Psoas muscle (tissue), 8 donors: ENCODE measurements at regions of chr19 and their contacts with region 1.

Region 1: DNA sequence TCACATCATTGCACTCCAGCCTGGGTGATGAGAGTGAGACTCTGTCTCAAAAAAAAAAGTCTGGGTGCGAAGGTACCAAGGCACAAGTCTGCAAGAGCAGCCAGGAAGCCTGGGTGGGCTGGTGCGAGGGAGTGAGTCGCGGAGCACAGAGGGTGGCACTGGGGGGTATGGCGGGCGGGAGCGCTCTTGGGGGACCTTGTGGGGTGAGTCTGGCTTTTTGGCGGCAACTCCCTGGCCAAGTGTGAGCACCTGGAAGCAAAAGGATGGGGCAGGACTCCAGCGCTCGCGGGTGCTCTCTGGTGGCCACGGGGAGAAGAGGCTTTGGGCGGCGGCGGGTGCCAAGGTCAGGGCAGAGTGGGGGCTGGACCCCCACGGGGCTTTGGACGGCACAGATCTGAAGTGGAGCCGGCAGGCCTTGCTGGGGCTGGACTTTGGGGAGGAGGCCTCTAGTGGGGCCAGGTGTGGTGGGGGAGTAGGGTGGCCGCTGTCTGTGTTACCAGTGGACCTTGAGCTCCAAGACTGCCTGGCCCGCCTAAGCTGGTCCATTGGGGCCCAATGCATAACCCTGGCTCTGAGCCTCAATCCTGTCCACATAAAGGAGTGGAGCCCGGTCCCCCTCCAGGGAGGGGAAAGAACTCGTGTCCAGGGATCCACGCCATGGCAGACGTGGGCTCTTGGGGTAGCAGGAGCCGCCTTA is 1.6 kb downstream of the P2RY11 start:
- DNase-seq: peak; percentile 59 to 77
- ATAC-seq: peak; percentile 20 to 63 (median 46)
- H3K4me3 ChIP-seq: no peak overlapping the region
- H3K27ac ChIP-seq: no peak overlapping the region
- H3K4me1 ChIP-seq: peaks cover 21% of the 10 kb centered on the region
- H3K27me3 ChIP-seq: no peaks in the 10 kb centered on the region
- CTCF ChIP-seq: peak; percentile 50

Region 2: GRCh38 chr19:10251792-10252694 is 139.0 kb after region 1 on chr19 and contains the start of gene MRPL4:
- intact Hi-C with region 1: loop called in 1 of 2 experiments (anchors 5 kb)
- DNase-seq: peak; percentile 95 to 97
- ATAC-seq: peak; percentile 95 to 97 (median 96)
- H3K4me3 ChIP-seq: peak within 1 kb of the TSS; percentile 93
- H3K27ac ChIP-seq: peak within 1 kb of the TSS; percentile 89
- H3K4me1 ChIP-seq: peaks cover 4% of the 10 kb centered on the region
- H3K27me3 ChIP-seq: no peaks in the 10 kb centered on the region
- CTCF ChIP-seq: no peak
- total RNA-seq, gene MRPL4: 54.9 to 94.0 (median 58.9) TPM

Region 3: GRCh38 chr19:10388957-10389356 is 275.9 kb after region 1 on chr19:
- intact Hi-C with region 1: loop called in 1 of 2 experiments (anchors 10 kb)
- DNase-seq: peak; percentile 87 to 91
- ATAC-seq: peak; percentile 64 to 80 (median 76)
- H3K4me3 ChIP-seq: no peak overlapping the region
- H3K27ac ChIP-seq: no peak overlapping the region
- H3K4me1 ChIP-seq: no peaks in the 10 kb centered on the region
- H3K27me3 ChIP-seq: no peaks in the 10 kb centered on the region
- CTCF ChIP-seq: peak; percentile 93